ENCODE measurements at regions of chr11 and their contacts with region 1.

Region 1: DNA sequence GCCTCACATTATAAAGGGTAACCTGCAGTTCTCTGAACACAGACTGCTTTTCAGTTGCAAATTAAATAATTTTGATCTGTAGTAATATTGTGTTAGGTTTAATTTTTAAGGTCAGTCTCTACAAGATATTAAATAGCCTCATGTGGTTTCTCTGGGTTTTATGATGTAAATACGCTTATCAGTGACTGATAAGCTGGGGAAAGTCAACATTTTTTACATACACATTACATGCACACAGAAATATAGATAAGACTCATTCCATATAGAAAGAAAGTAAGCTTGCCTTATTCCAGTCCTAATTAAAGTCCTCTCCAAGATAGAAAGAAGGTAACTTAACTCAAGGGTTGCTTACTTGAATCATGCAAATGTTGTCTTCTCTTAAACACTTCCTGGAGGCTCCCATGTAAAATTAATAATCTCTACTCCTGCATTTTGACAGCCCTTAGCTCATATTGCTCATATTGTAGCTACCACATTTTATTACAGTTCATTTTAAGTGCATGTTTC is 1.6 kb upstream of the OR5M3 start:
- DNase-seq: no peak
- H3K4me3 ChIP-seq: no peak overlapping the region
- H3K27ac ChIP-seq: no peak overlapping the region
- H3K4me1 ChIP-seq: no peaks in the 10 kb centered on the region
- H3K27me3 ChIP-seq: no peaks in the 10 kb centered on the region
- CTCF ChIP-seq: no peak
- EP300 ChIP-seq: no peak
- POLR2A ChIP-seq: no peak

Region 2: DNA sequence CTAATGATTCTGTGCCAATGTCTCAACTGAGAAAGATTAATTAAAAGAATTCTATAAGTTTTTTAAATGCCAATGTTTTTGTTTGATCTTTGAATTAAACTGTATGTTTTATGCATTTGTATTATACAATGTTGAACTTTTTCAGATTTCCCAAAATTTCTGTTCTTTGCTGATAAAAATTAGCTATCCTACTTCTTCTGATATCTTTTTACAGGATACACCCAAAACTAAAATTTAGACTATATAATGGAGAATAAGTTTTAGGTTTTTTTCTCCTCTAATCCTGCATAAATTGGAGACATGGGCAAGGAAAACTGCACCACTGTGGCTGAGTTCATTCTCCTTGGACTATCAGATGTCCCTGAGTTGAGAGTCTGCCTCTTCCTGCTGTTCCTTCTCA is 647.9 kb before region 1 on chr11 and contains the start of gene OR5L2:
- intact Hi-C with region 1: loop called in 1 of 4 experiments (anchors 5 kb)
- DNase-seq: no peak
- H3K4me3 ChIP-seq: no peak within 1 kb of the TSS
- H3K27ac ChIP-seq: no peak within 1 kb of the TSS
- H3K4me1 ChIP-seq: no peaks in the 10 kb centered on the region
- H3K27me3 ChIP-seq: no peaks in the 10 kb centered on the region
- CTCF ChIP-seq: no peak
- EP300 ChIP-seq: no peak
- POLR2A ChIP-seq: no peak
- total RNA-seq, gene OR5L2: not detected

Region 3: GRCh38 chr11:56522008-56522407 is 47.2 kb after region 1 on chr11:
- intact Hi-C with region 1: loop called in 1 of 4 experiments (anchors 10 kb)
- DNase-seq: no peak
- H3K4me3 ChIP-seq: no peak overlapping the region
- H3K27ac ChIP-seq: no peak overlapping the region
- H3K4me1 ChIP-seq: no peaks in the 10 kb centered on the region
- H3K27me3 ChIP-seq: no peaks in the 10 kb centered on the region
- CTCF ChIP-seq: no peak
- EP300 ChIP-seq: no peak
- POLR2A ChIP-seq: no peak

Measured in ovary (tissue), 10 donors.